Activated CD4-positive, alpha-beta T cell treated with anti-CD3 and anti-CD28 coated beads for 36 hours (primary cell): ENCODE measurements at regions of chr5 and their contacts with region 1.

Region 1: GRCh38 chr5:179678223-179679013 is 2.4 kb downstream of the CBY3 start:
- DNase-seq: peak; percentile 97
- ATAC-seq: peak; percentile 90
- H3K4me3 Mint-ChIP-seq: peak overlapping the region; percentile 91
- H3K27ac Mint-ChIP-seq: peak overlapping the region; percentile 97
- H3K4me1 Mint-ChIP-seq: peaks cover 23% of the 10 kb centered on the region
- H3K27me3 Mint-ChIP-seq: no peaks in the 10 kb centered on the region

Region 2: GRCh38 chr5:178626484-178627258 is 1051.7 kb before region 1 on chr5 and contains the start of gene CLK4:
- CTCF ChIA-PET with region 1: no interaction called
- POLR2A ChIA-PET with region 1: no interaction called
- intact Hi-C with region 1: loop called in 1 of 2 experiments (anchors 5 kb)
- DNase-seq: peak; percentile 98
- ATAC-seq: peak; percentile 79
- H3K4me3 Mint-ChIP-seq: peak within 1 kb of the TSS; percentile 93
- H3K27ac Mint-ChIP-seq: peak within 1 kb of the TSS; percentile 98
- H3K4me1 Mint-ChIP-seq: peaks cover 25% of the 10 kb centered on the region
- H3K27me3 Mint-ChIP-seq: no peaks in the 10 kb centered on the region
- total RNA-seq, gene CLK4: 21.2 to 22.6 TPM

Region 3: GRCh38 chr5:179550511-179551230 is 127.7 kb before region 1 on chr5 and contains the start of gene RUFY1:
- CTCF ChIA-PET with region 1: interaction called, 3 read pairs
- POLR2A ChIA-PET with region 1: no interaction called
- intact Hi-C with region 1: loop called in 1 of 2 experiments (anchors 1 kb)
- DNase-seq: peak; percentile 89
- ATAC-seq: peak; percentile 80
- H3K4me3 Mint-ChIP-seq: peak within 1 kb of the TSS; percentile 96
- H3K27ac Mint-ChIP-seq: peak within 1 kb of the TSS; percentile 99
- H3K4me1 Mint-ChIP-seq: peaks cover 37% of the 10 kb centered on the region
- H3K27me3 Mint-ChIP-seq: no peaks in the 10 kb centered on the region
- total RNA-seq, gene RUFY1: 29.6 to 33.8 TPM

Region 4: DNA sequence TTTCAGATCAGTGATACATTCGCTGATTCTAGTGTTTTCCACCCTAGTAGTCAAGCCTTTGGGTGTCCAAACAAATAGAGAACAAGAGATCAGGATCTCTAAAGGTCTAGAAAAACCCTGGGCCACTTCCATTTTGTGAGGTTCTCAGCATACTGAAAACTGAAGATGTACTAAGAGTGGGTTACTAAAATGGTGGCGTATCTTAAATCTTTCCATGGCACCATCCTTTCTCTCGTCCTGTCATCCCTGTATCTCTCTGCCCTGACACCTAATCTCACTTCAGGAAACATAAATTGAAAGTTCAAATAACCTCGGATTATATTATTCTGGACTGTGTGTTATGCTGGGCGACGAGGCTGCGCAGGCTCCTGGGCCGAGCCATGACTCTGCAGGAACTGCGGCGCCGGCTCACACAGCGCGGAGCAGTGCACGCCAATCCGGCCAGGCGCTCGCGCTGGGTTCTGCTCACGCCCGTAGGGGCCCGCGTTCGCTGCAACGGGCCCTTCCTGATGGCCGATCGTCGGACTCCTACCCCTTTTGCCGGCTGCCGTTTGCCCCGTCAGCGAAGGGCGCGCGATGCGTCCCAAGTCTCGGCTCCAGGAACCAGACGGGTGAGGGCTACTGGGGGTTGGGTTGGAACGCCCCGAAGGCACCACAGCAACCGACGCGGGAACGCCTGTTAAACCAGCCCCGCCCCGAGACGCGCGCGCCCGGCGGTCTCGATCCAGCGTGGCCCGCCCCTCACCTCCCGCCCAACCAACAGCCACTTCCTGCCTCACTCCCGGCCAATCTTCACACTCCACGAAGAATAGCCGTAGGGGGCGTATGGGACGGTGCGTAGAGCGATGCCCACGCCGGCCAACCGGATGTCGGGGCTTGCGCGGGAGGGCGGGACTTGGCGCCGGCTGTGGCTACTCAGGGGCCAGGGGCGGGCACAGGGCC is 19.8 kb after region 1 on chr5:
- CTCF ChIA-PET with region 1: interaction called, 4 read pairs
- POLR2A ChIA-PET with region 1: interaction called, 9 read pairs
- intact Hi-C with region 1: loop called (anchors 1 kb)
- DNase-seq: peak; percentile 99
- ATAC-seq: peak; percentile 89
- H3K4me3 Mint-ChIP-seq: peak overlapping the region; percentile 94
- H3K27ac Mint-ChIP-seq: peak overlapping the region; percentile 100
- H3K4me1 Mint-ChIP-seq: peaks cover 34% of the 10 kb centered on the region
- H3K27me3 Mint-ChIP-seq: no peaks in the 10 kb centered on the region

Region 5: DNA sequence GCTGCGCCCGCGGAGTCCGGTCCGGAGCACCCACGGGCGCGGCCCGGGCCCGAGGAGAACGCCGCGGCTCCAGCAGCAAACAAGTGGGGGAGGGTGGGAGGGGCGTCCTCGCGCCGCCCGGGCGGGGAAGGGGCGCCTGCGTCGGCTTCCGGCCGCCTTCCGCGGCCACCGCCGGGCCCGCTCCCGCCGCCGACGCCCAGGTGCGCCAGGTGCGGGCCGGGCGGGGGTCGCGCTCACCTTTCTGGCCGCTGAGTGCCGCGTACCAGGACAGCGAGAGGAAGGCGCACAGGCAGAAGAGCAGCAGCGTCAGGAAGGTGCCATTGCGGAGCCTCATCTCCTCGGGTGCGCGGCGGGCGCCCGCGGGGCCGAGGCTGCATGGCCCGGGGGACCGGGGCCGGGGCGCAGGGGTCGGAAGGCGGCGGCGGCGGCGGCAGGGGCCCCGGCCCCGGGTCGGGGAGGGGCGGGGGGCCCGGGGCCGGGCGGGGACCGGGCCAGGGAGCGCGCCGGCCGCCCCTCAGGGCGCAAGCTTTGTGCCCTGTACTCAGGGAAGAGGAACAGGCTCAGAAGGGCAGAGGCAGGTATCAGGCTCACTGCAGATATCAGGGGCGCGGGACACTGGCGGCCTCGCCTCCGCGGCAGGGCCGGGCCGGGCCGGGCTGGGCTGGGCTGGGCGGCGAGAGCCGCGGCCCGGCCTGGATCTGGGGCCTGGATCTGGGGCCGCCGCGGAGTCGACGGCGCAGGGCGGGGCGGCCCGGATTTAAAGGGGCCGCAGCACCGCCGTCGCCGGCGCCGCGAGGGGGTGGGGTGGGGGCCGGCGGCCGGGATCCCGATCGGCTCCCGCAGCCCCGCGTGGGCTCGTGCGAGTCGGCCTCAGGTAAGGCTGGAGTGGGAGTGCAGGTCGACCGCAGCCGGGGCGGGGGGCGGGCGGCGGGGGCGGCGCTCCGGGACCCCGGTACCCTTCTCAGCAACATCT is 128.1 kb after region 1 on chr5 and contains the start of gene MGAT4B:
- CTCF ChIA-PET with region 1: interaction called, 3 read pairs
- POLR2A ChIA-PET with region 1: no interaction called
- intact Hi-C with region 1: loop called in 1 of 2 experiments (anchors 1 kb)
- DNase-seq: peak; percentile 82
- ATAC-seq: peak; percentile 65
- H3K4me3 Mint-ChIP-seq: peak within 1 kb of the TSS; percentile 82
- H3K27ac Mint-ChIP-seq: peak within 1 kb of the TSS; percentile 25
- H3K4me1 Mint-ChIP-seq: peaks cover 36% of the 10 kb centered on the region
- H3K27me3 Mint-ChIP-seq: no peaks in the 10 kb centered on the region
- total RNA-seq, gene MGAT4B: 52.4 to 62.8 TPM

Region 6: DNA sequence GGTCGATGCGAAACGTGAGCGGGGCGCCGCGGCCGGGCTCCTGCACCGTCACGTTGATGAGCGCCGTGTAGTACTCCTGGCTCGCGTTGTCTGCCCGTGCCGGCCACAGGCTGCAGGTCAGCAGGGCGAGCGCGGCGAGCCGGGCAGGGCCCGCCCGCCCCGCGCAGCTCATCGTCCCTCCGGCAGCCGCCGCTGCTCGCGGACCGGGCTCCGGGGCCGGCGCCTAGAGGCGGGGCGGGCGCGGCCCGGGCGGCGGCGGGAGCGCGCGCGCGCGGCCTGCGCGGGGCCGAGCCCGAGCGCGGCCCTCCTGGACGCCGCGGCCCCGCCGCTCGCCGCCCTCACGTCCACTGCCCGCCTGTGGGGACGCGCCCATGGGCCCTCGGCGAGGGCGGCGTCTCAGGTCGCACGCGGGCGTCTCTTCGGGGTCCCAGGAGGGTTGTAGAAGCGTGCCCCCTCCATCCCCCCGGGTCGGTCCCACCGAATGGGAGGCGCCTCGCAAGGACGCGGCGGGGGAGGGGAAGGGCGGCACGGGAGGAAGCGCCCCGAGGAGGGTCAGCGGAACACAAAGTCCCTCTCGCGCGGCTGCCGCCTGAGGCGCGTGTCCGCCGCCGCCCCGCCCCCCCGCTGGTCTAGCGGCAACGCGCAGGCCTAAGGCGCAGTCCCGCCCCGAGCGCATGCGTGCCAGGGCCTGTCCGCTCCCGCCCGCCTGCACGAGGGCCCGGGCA is 393.3 kb after region 1 on chr5 and contains the start of gene RNF130:
- CTCF ChIA-PET with region 1: no interaction called
- POLR2A ChIA-PET with region 1: no interaction called
- intact Hi-C with region 1: loop called in 1 of 2 experiments (anchors 2 kb)
- DNase-seq: peak; percentile 93
- ATAC-seq: peak; percentile 79
- H3K4me3 Mint-ChIP-seq: peak within 1 kb of the TSS; percentile 80
- H3K27ac Mint-ChIP-seq: peak within 1 kb of the TSS; percentile 44
- H3K4me1 Mint-ChIP-seq: peaks cover 29% of the 10 kb centered on the region
- H3K27me3 Mint-ChIP-seq: no peaks in the 10 kb centered on the region
- total RNA-seq, gene RNF130: 10.3 to 13.3 TPM